ENCODE measurements at regions of chr18 and their contacts with region 1.

Region 1: GRCh38 chr18:23377669-23378301 is 75.3 kb upstream of the RIOK3 start:
- DNase-seq: no peak
- ATAC-seq: peak; percentile 51 to 78

Region 2: DNA sequence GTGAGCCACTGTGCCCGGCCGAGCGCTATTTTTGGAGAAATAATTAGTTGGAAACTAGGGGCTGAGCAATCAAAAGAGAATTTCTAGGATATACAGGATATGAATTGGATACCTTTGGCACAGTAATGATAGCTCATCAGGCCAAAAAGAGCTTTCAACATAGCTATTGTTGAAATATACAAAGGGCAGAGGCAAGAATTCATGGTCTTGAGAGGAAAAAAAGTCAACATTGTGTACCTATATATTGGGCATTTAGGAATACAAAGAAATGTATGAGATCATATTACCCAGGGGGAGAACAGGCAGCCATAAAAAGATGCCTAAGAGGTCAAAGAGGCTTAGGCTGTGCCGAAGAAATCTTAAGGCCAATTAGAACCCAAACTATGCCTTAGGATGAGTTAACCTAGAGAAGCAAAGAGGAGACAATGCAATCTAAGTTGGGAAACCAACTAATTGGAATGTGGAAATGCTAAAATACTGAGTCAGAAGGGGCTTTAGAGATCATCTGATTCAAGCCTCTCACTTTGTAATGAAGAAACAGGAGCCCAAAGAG is 345.7 kb before region 1 on chr18:
- intact Hi-C with region 1: loop called in 1 of 2 experiments (anchors 10 kb)
- DNase-seq: no peak
- ATAC-seq: peak in 1 of 2 donors; percentile 33

Region 3: DNA sequence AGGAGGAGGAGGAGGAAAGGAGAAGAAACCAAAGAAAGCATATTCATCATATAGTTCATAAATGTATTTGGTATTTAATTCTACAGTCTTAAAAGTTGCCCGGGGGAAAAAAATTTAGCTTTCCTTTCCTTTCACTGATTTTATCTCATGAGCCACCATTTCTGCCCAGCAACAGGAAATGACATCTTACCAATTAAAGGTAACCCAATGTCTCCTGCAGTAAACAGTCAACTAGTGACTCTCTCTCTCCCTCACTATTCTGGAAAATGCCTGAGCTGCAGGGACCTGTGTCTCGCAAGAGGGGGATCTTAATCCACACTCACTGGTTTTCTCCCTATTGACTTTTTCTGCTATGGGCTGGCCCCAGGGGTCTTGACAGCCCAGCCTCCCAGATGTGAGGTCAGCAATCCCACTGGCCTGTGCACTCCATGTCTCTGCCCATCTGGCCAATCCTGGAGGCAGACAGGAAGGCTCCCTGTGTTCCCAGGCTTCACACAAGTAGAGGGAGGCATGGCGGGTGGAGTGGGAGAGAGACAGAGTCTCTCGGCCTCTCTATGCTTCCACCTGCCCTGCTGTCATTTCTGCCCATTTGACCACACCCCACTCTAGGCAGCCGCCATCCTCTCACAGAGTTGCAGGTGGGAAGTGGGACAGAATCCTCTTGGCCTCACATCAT is 327.9 kb before region 1 on chr18:
- intact Hi-C with region 1: loop called in 1 of 2 experiments (anchors 10 kb)
- DNase-seq: no peak
- ATAC-seq: no peak

Region 4: DNA sequence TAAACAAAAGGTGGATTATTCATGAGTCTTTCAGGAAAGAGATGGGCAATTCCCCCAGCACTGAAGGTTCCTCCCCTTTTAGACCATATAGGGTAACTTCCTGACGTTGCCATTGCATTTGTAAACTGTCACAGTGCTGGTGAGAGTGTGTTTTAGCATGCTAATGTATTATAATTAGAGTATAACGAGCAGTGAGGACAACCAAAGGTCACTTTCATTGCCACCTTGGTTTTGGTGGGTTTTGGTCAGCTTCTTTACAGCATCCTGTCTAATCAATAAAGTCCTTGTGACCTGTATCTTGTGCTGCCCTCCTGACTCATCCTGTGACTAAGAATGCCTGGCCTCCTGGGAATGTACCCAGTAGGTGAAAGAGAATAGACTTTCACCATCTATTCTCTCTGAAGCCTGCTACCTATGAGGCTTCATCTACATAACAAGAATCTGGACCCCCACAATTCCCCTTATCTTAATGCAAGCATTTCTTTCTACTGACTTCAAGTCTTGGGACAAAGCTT is 93.8 kb before region 1 on chr18:
- intact Hi-C with region 1: no loop called
- DNase-seq: no peak
- ATAC-seq: no peak

Region 5: GRCh38 chr18:25167612-25168410 is 1790.0 kb after region 1 on chr18:
- intact Hi-C with region 1: no loop called
- DNase-seq: no peak
- ATAC-seq: peak; percentile 15 to 17